CD4-positive, alpha-beta memory T cell (primary cell): ENCODE measurements at regions of chr4 and their contacts with region 1.

Region 1: GRCh38 chr4:86497980-86498862 is 95.9 kb upstream of the PTPN13 start:
- DNase-seq: peak in 4 of 5 donors; percentile 26 to 40 (median 30)
- H3K4me3 ChIP-seq: no peak overlapping the region
- H3K4me3 Mint-ChIP-seq: no peak overlapping the region
- H3K27ac ChIP-seq: no peak overlapping the region
- H3K27ac Mint-ChIP-seq: no peak overlapping the region
- H3K4me1 ChIP-seq: no peaks in the 10 kb centered on the region
- H3K4me1 Mint-ChIP-seq: no peaks in the 10 kb centered on the region
- H3K27me3 ChIP-seq: no peaks in the 10 kb centered on the region
- H3K27me3 Mint-ChIP-seq: peaks cover 1 to 5% of the 10 kb centered on the region in 2 donors

Region 2: GRCh38 chr4:86487738-86488348 is 10.4 kb before region 1 on chr4:
- CTCF ChIA-PET with region 1: interaction called, 51 read pairs
- POLR2A ChIA-PET with region 1: no interaction called
- intact Hi-C with region 1: no loop called
- DNase-seq: no peak
- H3K4me3 ChIP-seq: no peak overlapping the region
- H3K4me3 Mint-ChIP-seq: no peak overlapping the region
- H3K27ac ChIP-seq: no peak overlapping the region
- H3K27ac Mint-ChIP-seq: no peak overlapping the region
- H3K4me1 ChIP-seq: no peaks in the 10 kb centered on the region
- H3K4me1 Mint-ChIP-seq: peaks cover 0 to 3% (median 2%) of the 10 kb centered on the region in 4 donors
- H3K27me3 ChIP-seq: no peaks in the 10 kb centered on the region
- H3K27me3 Mint-ChIP-seq: no peaks in the 10 kb centered on the region

Region 3: GRCh38 chr4:86508436-86508835 is 10.2 kb after region 1 on chr4:
- CTCF ChIA-PET with region 1: interaction called, 55 read pairs
- POLR2A ChIA-PET with region 1: no interaction called
- intact Hi-C with region 1: no loop called
- DNase-seq: peak in 2 of 5 donors; percentile 9 to 16
- H3K4me3 ChIP-seq: no peak overlapping the region
- H3K4me3 Mint-ChIP-seq: peak overlapping the region in 7 of 8 donors; percentile 1 to 64 (median 36)
- H3K27ac ChIP-seq: no peak overlapping the region
- H3K27ac Mint-ChIP-seq: peak overlapping the region in 5 of 7 donors; percentile 11 to 81 (median 31)
- H3K4me1 ChIP-seq: no peaks in the 10 kb centered on the region
- H3K4me1 Mint-ChIP-seq: peaks cover 0 to 6% (median 3%) of the 10 kb centered on the region in 4 donors
- H3K27me3 ChIP-seq: no peaks in the 10 kb centered on the region
- H3K27me3 Mint-ChIP-seq: peaks cover 4 to 6% of the 10 kb centered on the region in 2 donors

Region 4: GRCh38 chr4:86522349-86522748 is 24.1 kb after region 1 on chr4:
- CTCF ChIA-PET with region 1: interaction called, 101 read pairs
- POLR2A ChIA-PET with region 1: interaction called, 4 read pairs
- intact Hi-C with region 1: no loop called
- DNase-seq: peak in 4 of 5 donors; percentile 16 to 29 (median 18)
- H3K4me3 ChIP-seq: no peak overlapping the region
- H3K4me3 Mint-ChIP-seq: no peak overlapping the region
- H3K27ac ChIP-seq: no peak overlapping the region
- H3K27ac Mint-ChIP-seq: peak overlapping the region in 2 of 7 donors; percentile 16 to 43
- H3K4me1 ChIP-seq: no peaks in the 10 kb centered on the region
- H3K4me1 Mint-ChIP-seq: peaks cover 0 to 4% (median 0%) of the 10 kb centered on the region in 4 donors
- H3K27me3 ChIP-seq: no peaks in the 10 kb centered on the region
- H3K27me3 Mint-ChIP-seq: peaks cover 4 to 8% of the 10 kb centered on the region in 2 donors

Region 5: DNA sequence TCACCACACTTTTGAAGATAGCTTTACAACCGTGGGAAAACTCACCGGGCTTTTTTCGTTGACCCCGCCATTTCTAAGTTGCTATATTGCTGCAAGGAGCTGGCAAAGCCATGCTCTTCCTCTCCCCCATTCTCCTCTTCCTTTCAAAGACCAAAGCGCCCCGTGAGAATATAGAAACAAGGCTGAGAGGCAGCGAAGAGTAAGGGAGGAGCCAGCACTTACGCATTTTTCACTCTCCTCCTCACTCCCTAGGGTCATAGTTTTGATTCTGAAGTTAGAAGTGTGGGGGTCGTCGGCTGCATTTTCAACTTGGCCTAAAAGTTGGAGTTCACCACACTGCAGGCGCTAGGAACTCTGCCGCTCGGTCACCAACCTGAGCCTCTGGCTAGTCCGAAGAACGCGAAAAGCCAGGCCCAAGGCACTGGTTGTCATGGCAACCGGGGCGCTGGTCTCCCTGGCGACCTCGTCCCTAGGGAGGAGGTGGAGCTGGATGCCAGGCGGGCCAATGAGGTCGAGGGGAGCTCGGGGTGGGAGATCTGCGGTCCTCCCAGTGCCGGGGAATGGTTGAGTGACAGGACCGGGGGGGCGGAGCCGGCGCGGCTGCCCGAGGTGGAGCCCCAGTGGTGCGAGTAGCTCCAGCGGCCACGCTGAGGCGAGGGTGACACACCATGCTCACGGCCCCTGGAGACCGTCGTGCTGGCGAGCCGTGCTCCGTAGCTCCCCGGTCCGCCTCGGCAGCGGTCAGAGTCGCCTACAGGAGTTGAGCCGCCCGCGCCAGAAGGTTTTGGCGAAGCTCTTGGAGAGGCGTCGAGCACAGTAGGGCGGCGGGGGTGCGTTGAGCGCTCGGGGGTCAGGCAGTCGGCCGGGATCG is 95.7 kb after region 1 on chr4 and contains the start of gene PTPN13:
- CTCF ChIA-PET with region 1: interaction called, 16 read pairs
- POLR2A ChIA-PET with region 1: no interaction called
- intact Hi-C with region 1: no loop called
- DNase-seq: peak; percentile 66 to 83 (median 75)
- H3K4me3 ChIP-seq: peak within 1 kb of the TSS; percentile 59 to 76
- H3K4me3 Mint-ChIP-seq: peak within 1 kb of the TSS; percentile 86 to 96 (median 91)
- H3K27ac ChIP-seq: peak within 1 kb of the TSS; percentile 61
- H3K27ac Mint-ChIP-seq: peak within 1 kb of the TSS; percentile 85 to 96 (median 90)
- H3K4me1 ChIP-seq: peaks cover 18% of the 10 kb centered on the region
- H3K4me1 Mint-ChIP-seq: peaks cover 6 to 25% (median 14%) of the 10 kb centered on the region in 4 donors
- H3K27me3 ChIP-seq: no peaks in the 10 kb centered on the region
- H3K27me3 Mint-ChIP-seq: peaks cover 7 to 19% of the 10 kb centered on the region in 2 donors
- total RNA-seq, gene PTPN13: 7.6 to 7.8 TPM

Region 6: GRCh38 chr4:86895692-86896488 is 397.7 kb after region 1 on chr4:
- CTCF ChIA-PET with region 1: interaction called, 143 read pairs
- POLR2A ChIA-PET with region 1: no interaction called
- intact Hi-C with region 1: loop called (anchors 1 kb)
- DNase-seq: peak in 4 of 5 donors; percentile 53 to 65 (median 56)
- H3K4me3 ChIP-seq: no peak overlapping the region
- H3K4me3 Mint-ChIP-seq: no peak overlapping the region
- H3K27ac ChIP-seq: no peak overlapping the region
- H3K27ac Mint-ChIP-seq: no peak overlapping the region
- H3K4me1 ChIP-seq: peaks cover 14% of the 10 kb centered on the region
- H3K4me1 Mint-ChIP-seq: peaks cover 5 to 10% (median 8%) of the 10 kb centered on the region in 4 donors
- H3K27me3 ChIP-seq: no peaks in the 10 kb centered on the region
- H3K27me3 Mint-ChIP-seq: peaks cover 3 to 14% of the 10 kb centered on the region in 2 donors

Region 7: GRCh38 chr4:87235020-87235671 is 736.9 kb after region 1 on chr4:
- CTCF ChIA-PET with region 1: interaction called, 3 read pairs
- POLR2A ChIA-PET with region 1: no interaction called
- intact Hi-C with region 1: loop called (anchors 5 kb)
- DNase-seq: no peak
- H3K4me3 ChIP-seq: peak overlapping the region in 1 of 2 donors; percentile 47
- H3K4me3 Mint-ChIP-seq: peak overlapping the region in 6 of 8 donors; percentile 80 to 92 (median 84)
- H3K27ac ChIP-seq: no peak overlapping the region
- H3K27ac Mint-ChIP-seq: peak overlapping the region in 2 of 7 donors; percentile 1 to 50
- H3K4me1 ChIP-seq: peaks cover 5% of the 10 kb centered on the region
- H3K4me1 Mint-ChIP-seq: peaks cover 0 to 7% (median under 1%) of the 10 kb centered on the region in 4 donors
- H3K27me3 ChIP-seq: peaks cover 4% of the 10 kb centered on the region
- H3K27me3 Mint-ChIP-seq: peaks cover 2 to 6% of the 10 kb centered on the region in 2 donors